ENCODE measurements at regions of chr12 and their contacts with region 1.

Region 1: GRCh38 chr12:118164798-118165486 is 29.0 kb downstream of the PEBP1 start:
- DNase-seq: no peak
- ATAC-seq: no peak
- H3K4me3 Mint-ChIP-seq: no peak overlapping the region
- H3K27ac Mint-ChIP-seq: peak overlapping the region; percentile 21
- H3K4me1 Mint-ChIP-seq: peaks cover 31% of the 10 kb centered on the region
- H3K27me3 Mint-ChIP-seq: no peaks in the 10 kb centered on the region
- CTCF ChIP-seq: no peak

Region 2: DNA sequence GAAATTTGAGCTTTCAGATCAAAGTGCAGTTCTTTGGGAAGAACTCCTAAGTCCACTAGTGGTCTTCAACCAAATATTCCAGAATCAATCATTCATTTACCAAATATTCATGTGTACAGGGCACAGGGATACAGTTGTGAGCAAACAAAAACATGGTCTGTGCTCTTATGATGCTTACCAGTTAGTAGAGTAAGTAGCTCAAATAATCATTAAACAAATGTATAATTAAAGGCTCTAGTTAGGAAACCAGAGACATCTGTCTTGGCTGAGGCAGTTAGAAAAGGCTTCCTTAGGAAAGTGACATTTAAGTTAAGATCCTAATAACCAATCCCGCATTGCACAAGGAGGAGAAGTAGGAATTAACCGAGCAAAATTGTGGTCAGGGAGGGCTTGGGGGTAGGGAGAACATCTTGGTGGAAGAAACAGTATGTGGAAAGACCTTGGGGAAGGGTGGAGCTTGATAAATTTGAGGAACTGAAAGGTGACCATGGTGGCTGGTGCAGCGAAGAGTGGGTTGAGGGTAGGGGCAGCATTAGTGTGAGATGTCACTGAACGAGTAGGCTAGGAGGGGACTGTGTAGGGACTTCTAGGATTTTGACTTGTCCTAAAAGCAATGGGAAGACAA is 11.0 kb after region 1 on chr12:
- CTCF ChIA-PET with region 1: interaction called, 21 read pairs
- POLR2A ChIA-PET with region 1: no interaction called
- intact Hi-C with region 1: loop called (anchors 1 kb)
- DNase-seq: no peak
- ATAC-seq: peak; percentile 95
- H3K4me3 Mint-ChIP-seq: peak overlapping the region; percentile 5
- H3K27ac Mint-ChIP-seq: peak overlapping the region; percentile 51
- H3K4me1 Mint-ChIP-seq: peaks cover 13% of the 10 kb centered on the region
- H3K27me3 Mint-ChIP-seq: no peaks in the 10 kb centered on the region
- CTCF ChIP-seq: no peak

Region 3: GRCh38 chr12:118307069-118307954 is 142.4 kb after region 1 on chr12:
- CTCF ChIA-PET with region 1: no interaction called
- POLR2A ChIA-PET with region 1: interaction called, 16 read pairs
- intact Hi-C with region 1: no loop called
- DNase-seq: no peak
- ATAC-seq: peak; percentile 57
- H3K4me3 Mint-ChIP-seq: peak overlapping the region; percentile 24
- H3K27ac Mint-ChIP-seq: peak overlapping the region; percentile 3
- H3K4me1 Mint-ChIP-seq: peaks cover 42% of the 10 kb centered on the region
- H3K27me3 Mint-ChIP-seq: no peaks in the 10 kb centered on the region
- CTCF ChIP-seq: no peak

Measured in activated B cell treated with CpG ODN at 0.5 μM for 24 hours (primary cell).